GM10248 (cell line): ENCODE measurements at regions of chr11 and their contacts with region 1.

Region 1: DNA sequence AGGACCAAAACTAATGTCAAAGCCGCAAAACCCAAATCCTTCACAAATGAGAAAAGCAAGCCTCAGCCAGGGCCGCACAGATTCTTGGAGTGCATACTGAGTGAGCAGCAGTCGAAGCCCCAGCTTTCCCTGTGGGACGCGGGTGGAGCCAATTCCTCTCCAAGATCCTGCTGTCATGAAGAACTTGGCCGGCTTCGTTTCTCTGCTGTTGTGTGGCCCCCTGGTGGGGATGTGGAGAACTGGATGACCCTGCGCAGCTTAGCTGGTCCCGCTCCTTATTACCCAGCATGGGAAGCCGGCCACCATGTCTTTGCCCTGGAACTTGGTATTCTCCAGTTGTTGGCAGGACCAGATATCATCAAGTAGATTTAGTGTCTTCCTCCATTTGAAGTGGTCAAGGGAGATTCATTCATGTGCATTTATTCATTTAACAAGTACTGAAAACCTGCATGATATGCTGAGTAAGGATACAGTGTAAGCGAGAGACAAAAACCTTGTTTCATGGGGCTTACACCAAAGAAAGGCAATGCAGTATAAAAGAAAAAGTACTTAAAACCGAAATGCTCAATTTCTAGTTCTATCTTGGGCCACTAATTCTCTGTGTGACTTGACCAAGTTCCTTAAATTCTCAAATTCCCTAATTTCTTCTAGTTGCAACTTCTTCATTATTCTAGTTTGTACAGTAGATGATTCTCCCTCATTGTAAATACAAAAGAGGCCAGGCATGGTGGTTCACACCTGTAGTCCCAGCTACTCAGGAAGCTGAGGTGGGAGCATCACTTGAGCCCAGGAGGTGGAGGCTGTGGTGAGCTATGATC is 56.7 kb upstream of the CRTAM start:
- DNase-seq: peak; percentile 82
- CTCF ChIP-seq: peak; percentile 86

Region 2: GRCh38 chr11:122578168-122578825 is 203.3 kb before region 1 on chr11:
- CTCF ChIA-PET with region 1: interaction called, 38 read pairs
- POLR2A ChIA-PET with region 1: no interaction called
- DNase-seq: no peak
- CTCF ChIP-seq: no peak

Region 3: DNA sequence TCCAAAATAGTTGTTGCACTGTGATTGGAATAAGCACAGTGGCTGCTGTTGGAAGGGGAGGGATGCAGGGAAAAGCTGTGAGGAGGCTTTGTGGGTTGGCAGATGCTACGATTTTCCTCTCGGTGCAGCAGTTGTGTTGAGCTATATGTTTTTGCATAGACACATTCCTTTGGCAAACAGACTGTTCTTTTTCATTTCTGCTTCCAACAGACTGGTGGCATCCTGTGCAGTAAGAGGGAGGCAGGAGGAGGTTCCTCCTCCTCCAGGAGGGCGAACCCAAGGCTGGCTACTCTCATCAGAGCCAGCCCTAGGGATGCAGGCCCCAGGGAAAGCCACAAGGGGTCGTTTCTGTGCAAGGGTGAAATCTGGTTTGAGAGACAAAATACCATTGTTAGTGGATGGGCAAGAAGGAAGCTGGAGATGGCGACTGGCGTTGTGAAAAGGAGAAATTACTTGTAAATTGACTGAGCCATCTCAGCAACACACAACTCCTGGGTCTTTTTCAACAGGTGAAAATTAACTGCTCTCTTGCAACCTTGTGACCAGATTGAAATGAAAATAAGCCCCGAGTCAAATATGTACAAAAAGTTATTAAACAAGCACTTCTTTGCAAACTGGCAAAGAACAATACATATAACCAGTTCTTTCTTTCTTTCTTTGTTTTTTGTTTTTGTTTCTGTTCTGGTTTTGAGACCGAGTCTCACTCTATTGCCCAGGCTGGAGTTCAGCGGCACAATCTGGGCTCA is 152.6 kb before region 1 on chr11:
- CTCF ChIA-PET with region 1: interaction called, 150 read pairs
- POLR2A ChIA-PET with region 1: no interaction called
- DNase-seq: peak; percentile 65
- CTCF ChIP-seq: peak; percentile 80

Region 4: DNA sequence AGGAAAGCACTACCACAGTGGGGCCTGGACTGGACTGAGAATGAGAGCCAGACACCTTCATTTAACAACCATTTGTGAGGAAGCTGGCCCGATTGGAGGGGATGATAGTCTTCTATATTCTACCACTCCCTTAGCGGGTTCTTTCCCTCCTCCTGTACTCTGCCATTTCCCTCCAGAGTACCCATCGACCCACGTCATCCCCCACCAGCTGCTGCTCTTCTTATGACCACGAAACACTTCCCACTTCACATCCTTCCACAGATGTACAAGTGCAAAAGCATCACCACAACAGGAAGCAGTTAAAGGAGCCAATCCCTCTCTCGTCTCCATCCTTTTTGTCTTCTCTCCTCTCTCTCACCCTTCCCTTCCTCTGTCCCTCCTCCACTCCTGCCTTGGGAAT is 144.0 kb before region 1 on chr11:
- CTCF ChIA-PET with region 1: interaction called, 150 read pairs
- POLR2A ChIA-PET with region 1: no interaction called
- DNase-seq: no peak
- CTCF ChIP-seq: no peak

Region 5: GRCh38 chr11:122646549-122647340 is 134.8 kb before region 1 on chr11:
- CTCF ChIA-PET with region 1: interaction called, 15 read pairs
- POLR2A ChIA-PET with region 1: no interaction called
- DNase-seq: no peak
- CTCF ChIP-seq: no peak

Region 6: DNA sequence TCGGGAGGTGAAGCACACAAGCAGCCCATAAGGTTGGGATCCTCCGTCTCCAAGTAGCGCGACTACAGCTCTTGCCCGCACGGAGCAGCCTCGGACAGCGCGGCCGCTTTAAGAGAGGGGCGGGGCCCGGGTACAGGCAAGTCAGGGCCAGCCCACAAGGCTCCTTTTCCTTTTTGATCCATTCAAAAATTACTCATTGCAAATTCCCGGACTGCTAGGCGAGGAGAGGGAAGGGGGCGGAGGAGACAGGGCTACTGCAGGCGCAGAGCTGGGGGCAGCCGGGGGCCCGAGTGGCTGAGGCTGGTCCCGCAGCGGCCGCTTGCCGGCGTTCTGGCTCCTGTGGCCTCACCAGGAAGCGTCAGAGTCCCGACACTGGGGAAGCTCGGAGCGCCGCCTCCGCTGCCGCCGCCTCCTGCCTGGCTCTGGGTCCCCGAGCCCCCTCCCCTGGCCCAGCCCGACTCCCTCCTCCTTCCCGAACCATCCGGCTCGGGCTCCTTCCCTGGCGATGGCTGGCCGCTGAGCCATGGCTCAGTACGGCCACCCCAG is 126.0 kb before region 1 on chr11 and contains the start of gene UBASH3B:
- CTCF ChIA-PET with region 1: interaction called, 17 read pairs
- POLR2A ChIA-PET with region 1: no interaction called
- DNase-seq: peak; percentile 68
- CTCF ChIP-seq: peak; percentile 16